ENCODE measurements at regions of chr14 and their contacts with region 1.

Region 1: GRCh38 chr14:77067632-77068514 is 30.2 kb upstream of the CIPC start:
- DNase-seq: peak; percentile 87

Region 2: GRCh38 chr14:76876076-76876475 is 191.8 kb before region 1 on chr14:
- intact Hi-C with region 1: loop called (anchors 2 to 5 kb)
- DNase-seq: no peak

Region 3: DNA sequence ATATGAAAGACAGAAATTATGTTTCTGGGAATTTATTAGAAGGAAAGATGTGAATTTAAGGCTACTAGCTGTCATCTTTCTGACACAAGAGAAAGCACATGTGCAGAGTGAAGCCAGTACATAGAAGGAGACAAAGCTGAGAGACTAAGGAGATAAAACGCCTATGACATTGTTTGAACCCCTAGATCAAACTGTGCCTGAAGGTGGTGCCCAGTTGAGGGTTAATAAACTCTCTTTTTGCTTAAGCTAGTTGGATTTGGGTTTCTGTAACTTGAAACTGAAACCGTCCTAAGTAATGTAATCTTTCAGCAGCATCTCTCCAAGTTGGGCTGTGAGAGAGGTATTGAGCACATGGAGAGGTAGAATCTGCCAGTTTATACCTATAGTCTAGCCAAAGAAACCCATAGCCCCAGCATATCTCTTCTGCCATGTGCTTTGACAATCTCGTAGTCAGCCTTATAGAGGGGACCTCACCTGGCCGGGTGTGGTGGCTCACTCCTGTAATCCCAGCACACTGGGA is 157.4 kb before region 1 on chr14:
- intact Hi-C with region 1: loop called (anchors 5 kb)
- DNase-seq: no peak

Region 4: GRCh38 chr14:77053046-77053841 is 14.6 kb before region 1 on chr14:
- intact Hi-C with region 1: no loop called
- DNase-seq: peak; percentile 88

Region 5: GRCh38 chr14:77495334-77495733 is 427.5 kb after region 1 on chr14:
- intact Hi-C with region 1: no loop called
- DNase-seq: no peak

Measured in posterior vena cava (tissue), 2 donors.